CD8-positive, alpha-beta T cell (primary cell): ENCODE measurements at regions of chr15 and their contacts with region 1.

Region 1: DNA sequence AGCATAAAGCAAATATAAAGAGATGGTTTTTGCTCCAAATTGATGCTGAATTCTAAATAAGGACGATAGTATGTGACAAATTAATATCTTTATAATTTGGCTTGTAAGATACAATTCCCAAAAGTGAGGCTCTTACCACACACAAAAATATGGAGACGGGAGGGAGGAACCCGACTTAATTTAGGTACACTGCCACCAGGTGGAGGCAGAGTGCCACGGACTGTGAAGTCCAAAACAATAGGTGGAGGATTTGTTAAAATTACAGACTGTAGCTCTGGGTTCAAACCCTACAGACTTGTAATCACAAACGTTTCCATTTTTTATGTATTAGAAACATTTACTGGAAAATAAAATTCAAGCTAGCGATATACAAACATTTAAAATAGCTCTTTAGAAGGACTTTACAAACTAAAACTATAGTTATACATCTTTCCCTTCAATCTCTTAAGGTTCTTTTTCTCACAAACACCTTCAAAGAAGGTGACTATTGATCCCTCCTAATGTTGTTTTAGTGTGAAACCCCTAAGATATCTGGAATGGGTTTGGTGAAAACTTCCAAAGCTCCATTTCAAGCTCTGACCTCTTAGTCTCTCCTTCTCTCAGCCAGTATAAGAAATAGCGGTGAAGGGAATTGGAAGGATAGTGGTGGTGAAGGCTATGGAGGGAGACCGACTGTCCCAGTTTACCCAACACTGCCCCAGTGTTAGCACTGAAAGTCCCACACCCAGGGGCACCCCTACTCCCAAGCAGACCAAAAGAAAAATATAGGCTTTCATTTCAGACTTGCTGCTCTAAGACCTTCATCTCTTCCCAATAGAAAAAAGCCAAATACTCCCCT is 89.7 kb downstream of the AQP9 start:
- DNase-seq: peak; percentile 10 to 76 (median 62)
- ATAC-seq: no peak
- H3K4me3 ChIP-seq: no peak overlapping the region
- H3K4me3 Mint-ChIP-seq: no peak overlapping the region
- H3K27ac ChIP-seq: no peak overlapping the region
- H3K27ac Mint-ChIP-seq: no peak overlapping the region
- H3K4me1 ChIP-seq: no peaks in the 10 kb centered on the region
- H3K4me1 Mint-ChIP-seq: peaks cover 14% of the 10 kb centered on the region
- H3K27me3 ChIP-seq: no peaks in the 10 kb centered on the region
- H3K27me3 Mint-ChIP-seq: peaks cover 5% of the 10 kb centered on the region
- CTCF ChIP-seq: peak; percentile 87

Region 2: DNA sequence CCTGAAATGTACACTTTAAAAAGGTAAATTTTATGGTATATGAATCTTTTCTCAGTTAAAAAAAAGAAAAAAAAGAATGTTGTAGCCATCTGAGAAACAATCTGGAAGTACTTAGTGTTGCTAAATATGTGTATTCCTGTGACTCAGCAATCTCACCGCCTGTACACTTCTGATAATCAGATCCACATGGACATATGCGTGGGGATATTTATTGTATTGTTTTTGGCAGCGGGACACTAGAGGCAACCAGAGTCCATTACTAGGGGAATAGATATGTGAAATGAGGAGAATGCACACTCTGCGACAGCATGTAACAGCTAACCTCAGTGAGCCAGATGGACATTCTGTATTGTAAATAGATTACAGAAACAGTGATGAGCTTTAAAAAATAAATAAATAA is 24.4 kb before region 1 on chr15:
- CTCF ChIA-PET with region 1: no interaction called
- POLR2A ChIA-PET with region 1: no interaction called
- intact Hi-C with region 1: no loop called
- DNase-seq: no peak
- ATAC-seq: no peak
- H3K4me3 ChIP-seq: no peak overlapping the region
- H3K4me3 Mint-ChIP-seq: no peak overlapping the region
- H3K27ac ChIP-seq: no peak overlapping the region
- H3K27ac Mint-ChIP-seq: no peak overlapping the region
- H3K4me1 ChIP-seq: no peaks in the 10 kb centered on the region
- H3K4me1 Mint-ChIP-seq: no peaks in the 10 kb centered on the region
- H3K27me3 ChIP-seq: no peaks in the 10 kb centered on the region
- H3K27me3 Mint-ChIP-seq: no peaks in the 10 kb centered on the region
- CTCF ChIP-seq: no peak

Region 3: DNA sequence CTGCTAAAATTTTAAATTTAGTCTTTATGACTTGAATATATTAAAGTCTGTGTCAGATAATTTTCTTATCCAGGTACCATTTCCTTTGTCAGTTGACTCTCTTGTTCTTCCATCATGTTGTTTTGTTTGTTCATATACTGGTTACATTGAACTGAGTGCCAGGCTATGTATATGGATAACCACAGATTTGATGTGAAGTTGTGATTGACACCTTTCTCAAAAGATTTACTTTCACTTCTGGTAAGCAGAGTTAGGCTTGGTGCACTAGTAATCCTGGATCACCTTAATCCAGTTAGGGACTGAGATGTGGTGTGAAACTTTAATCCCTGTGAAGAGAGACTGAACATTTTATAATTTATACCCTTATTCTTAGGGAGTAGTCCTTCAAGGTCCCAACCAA is 422.2 kb after region 1 on chr15:
- CTCF ChIA-PET with region 1: no interaction called
- POLR2A ChIA-PET with region 1: no interaction called
- intact Hi-C with region 1: loop called in 1 of 2 experiments (anchors 10 kb)
- DNase-seq: peak in 1 of 9 experiments; percentile 39
- ATAC-seq: no peak
- H3K4me3 ChIP-seq: no peak overlapping the region
- H3K4me3 Mint-ChIP-seq: no peak overlapping the region
- H3K27ac ChIP-seq: no peak overlapping the region
- H3K27ac Mint-ChIP-seq: peak overlapping the region; percentile 1
- H3K4me1 ChIP-seq: no peaks in the 10 kb centered on the region
- H3K4me1 Mint-ChIP-seq: peaks cover 7% of the 10 kb centered on the region
- H3K27me3 ChIP-seq: no peaks in the 10 kb centered on the region
- H3K27me3 Mint-ChIP-seq: no peaks in the 10 kb centered on the region
- CTCF ChIP-seq: no peak

Region 4: DNA sequence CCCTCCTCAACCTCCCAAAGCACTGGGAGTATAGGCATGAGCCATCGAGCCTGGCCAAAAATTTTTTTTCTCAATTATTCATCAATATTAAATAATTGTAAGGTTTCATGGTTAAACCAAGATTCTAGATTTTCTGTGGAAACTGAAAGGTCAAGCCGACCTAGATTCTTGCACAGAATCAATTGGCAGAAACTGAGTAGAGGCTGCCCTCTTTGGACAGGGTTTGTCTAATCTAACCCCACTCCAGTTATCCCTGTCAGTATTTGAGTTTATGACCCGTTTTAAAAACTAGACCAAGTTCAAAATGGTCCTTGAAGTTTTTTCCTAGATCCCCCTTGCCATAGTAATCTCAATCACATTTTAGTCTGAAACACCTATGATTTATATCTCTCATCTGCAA is 530.2 kb after region 1 on chr15:
- CTCF ChIA-PET with region 1: interaction called, 10 read pairs
- POLR2A ChIA-PET with region 1: no interaction called
- intact Hi-C with region 1: loop called in 1 of 2 experiments (anchors 1 kb)
- DNase-seq: no peak
- ATAC-seq: no peak
- H3K4me3 ChIP-seq: no peak overlapping the region
- H3K4me3 Mint-ChIP-seq: no peak overlapping the region
- H3K27ac ChIP-seq: no peak overlapping the region
- H3K27ac Mint-ChIP-seq: no peak overlapping the region
- H3K4me1 ChIP-seq: no peaks in the 10 kb centered on the region
- H3K4me1 Mint-ChIP-seq: no peaks in the 10 kb centered on the region
- H3K27me3 ChIP-seq: no peaks in the 10 kb centered on the region
- H3K27me3 Mint-ChIP-seq: peaks cover 2% of the 10 kb centered on the region
- CTCF ChIP-seq: no peak

Region 5: DNA sequence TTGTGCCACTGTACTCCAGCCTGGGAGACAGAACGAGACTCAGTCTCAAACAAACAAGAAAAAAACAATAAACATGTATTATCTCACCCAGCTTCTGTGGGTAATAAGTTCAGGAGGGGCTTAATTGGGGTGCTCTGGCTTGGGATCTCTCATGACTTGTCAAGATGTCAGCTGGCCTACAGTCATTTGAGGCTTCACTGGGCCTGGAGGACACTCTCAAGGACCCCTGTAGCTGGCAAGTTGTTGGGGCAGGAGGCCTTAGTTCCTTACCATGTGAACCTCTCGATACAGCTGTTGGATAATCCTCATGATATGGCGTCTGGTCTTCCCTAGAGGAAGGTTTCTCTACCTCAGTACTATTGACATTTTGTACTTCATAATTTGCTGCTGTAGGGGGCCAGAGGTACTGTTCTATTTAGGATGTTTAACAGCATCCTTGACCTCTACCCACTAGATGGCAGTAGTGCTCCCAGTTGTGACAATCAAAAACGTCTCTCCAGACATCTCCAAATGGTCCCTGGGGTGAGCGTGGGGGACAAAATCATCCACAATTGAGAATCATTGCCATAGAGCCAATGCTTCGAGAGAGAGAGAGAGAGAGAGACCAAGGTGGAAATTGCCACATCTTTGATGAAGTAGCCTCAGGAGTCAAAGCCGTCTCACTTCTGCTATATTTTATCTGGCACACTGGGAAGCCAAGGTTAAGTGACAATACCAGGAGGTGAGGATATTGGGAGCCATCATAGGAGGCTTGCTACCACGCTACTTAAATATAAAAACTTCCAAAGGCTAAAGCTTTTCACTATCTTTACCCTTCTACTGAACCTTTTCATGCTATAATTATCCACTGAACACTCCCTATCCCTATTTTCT is 729.4 kb after region 1 on chr15:
- CTCF ChIA-PET with region 1: interaction called, 3 read pairs
- POLR2A ChIA-PET with region 1: no interaction called
- intact Hi-C with region 1: loop called in 1 of 2 experiments (anchors 10 kb)
- DNase-seq: peak; percentile 18 to 84 (median 61)
- ATAC-seq: peak; percentile 96
- H3K4me3 ChIP-seq: no peak overlapping the region
- H3K4me3 Mint-ChIP-seq: no peak overlapping the region
- H3K27ac ChIP-seq: no peak overlapping the region
- H3K27ac Mint-ChIP-seq: no peak overlapping the region
- H3K4me1 ChIP-seq: no peaks in the 10 kb centered on the region
- H3K4me1 Mint-ChIP-seq: peaks cover 10% of the 10 kb centered on the region
- H3K27me3 ChIP-seq: no peaks in the 10 kb centered on the region
- H3K27me3 Mint-ChIP-seq: no peaks in the 10 kb centered on the region
- CTCF ChIP-seq: peak; percentile 82

Region 6: GRCh38 chr15:59074607-59075006 is 846.7 kb after region 1 on chr15:
- CTCF ChIA-PET with region 1: no interaction called
- POLR2A ChIA-PET with region 1: no interaction called
- intact Hi-C with region 1: loop called in 1 of 2 experiments (anchors 10 kb)
- DNase-seq: no peak
- ATAC-seq: no peak
- H3K4me3 ChIP-seq: no peak overlapping the region
- H3K4me3 Mint-ChIP-seq: no peak overlapping the region
- H3K27ac ChIP-seq: no peak overlapping the region
- H3K27ac Mint-ChIP-seq: peak overlapping the region; percentile 78
- H3K4me1 ChIP-seq: no peaks in the 10 kb centered on the region
- H3K4me1 Mint-ChIP-seq: no peaks in the 10 kb centered on the region
- H3K27me3 ChIP-seq: no peaks in the 10 kb centered on the region
- H3K27me3 Mint-ChIP-seq: no peaks in the 10 kb centered on the region
- CTCF ChIP-seq: no peak